ENCODE measurements at regions of chr14 and their contacts with region 1.

Region 1: GRCh38 chr14:75751296-75751695 is 90.2 kb downstream of the TTLL5 start:
- DNase-seq: peak; percentile 49
- ATAC-seq: peak; percentile 81
- H3K4me3 ChIP-seq: no peak overlapping the region
- H3K27ac ChIP-seq: no peak overlapping the region
- H3K4me1 ChIP-seq: peaks cover 1% of the 10 kb centered on the region; the same call in 1 of the 2 replicates
- H3K27me3 ChIP-seq: no peaks in the 10 kb centered on the region
- CTCF ChIP-seq: no peak
- POLR2A ChIP-seq: no peak
- RAD21 ChIP-seq: no peak

Region 2: GRCh38 chr14:75249251-75249957 is 501.9 kb before region 1 on chr14:
- CTCF ChIA-PET with region 1: no interaction called
- POLR2A ChIA-PET with region 1: no interaction called
- dilution Hi-C with region 1: no loop called
- in situ Hi-C with region 1: no loop called
- intact Hi-C with region 1: no loop called
- DNase-seq: no peak
- ATAC-seq: no peak
- H3K4me3 ChIP-seq: no peak overlapping the region
- H3K27ac ChIP-seq: no peak overlapping the region
- H3K4me1 ChIP-seq: no peaks in the 10 kb centered on the region
- H3K27me3 ChIP-seq: peaks cover 10% of the 10 kb centered on the region; the same call in 1 of the 2 replicates
- CTCF ChIP-seq: no peak
- POLR2A ChIP-seq: no peak
- RAD21 ChIP-seq: no peak

Region 3: GRCh38 chr14:75720842-75721498 is 30.3 kb before region 1 on chr14:
- CTCF ChIA-PET with region 1: interaction called, 10 read pairs
- POLR2A ChIA-PET with region 1: no interaction called
- dilution Hi-C with region 1: no loop called
- in situ Hi-C with region 1: no loop called
- intact Hi-C with region 1: no loop called
- DNase-seq: no peak
- ATAC-seq: no peak
- H3K4me3 ChIP-seq: no peak overlapping the region
- H3K27ac ChIP-seq: no peak overlapping the region
- H3K4me1 ChIP-seq: peaks cover 6% of the 10 kb centered on the region
- H3K27me3 ChIP-seq: peaks cover 23% of the 10 kb centered on the region
- CTCF ChIP-seq: no peak
- POLR2A ChIP-seq: no peak
- RAD21 ChIP-seq: no peak

Region 4: DNA sequence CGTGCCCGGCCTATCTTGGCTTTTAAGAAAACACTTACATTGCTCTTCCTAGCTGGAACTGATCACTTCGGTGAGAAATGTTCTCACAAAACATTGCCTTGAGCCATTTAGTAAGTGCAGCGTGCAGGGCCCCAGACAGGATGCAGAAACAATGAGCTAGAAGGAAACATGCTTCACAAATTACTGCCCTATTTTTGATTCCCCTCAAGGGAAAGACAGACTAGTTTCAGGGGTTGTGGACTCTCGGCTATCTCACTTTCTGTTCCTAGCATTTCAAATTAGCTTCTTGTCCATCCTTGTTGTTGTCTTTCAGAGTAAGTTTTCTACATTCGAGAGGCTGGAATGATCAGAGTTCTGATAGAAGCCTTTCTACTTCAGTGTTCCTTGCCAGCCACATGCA is 208.9 kb after region 1 on chr14:
- CTCF ChIA-PET with region 1: no interaction called
- POLR2A ChIA-PET with region 1: interaction called, 13 read pairs
- dilution Hi-C with region 1: no loop called
- in situ Hi-C with region 1: no loop called
- intact Hi-C with region 1: no loop called
- DNase-seq: no peak
- ATAC-seq: no peak
- H3K4me3 ChIP-seq: no peak overlapping the region
- H3K27ac ChIP-seq: no peak overlapping the region
- H3K4me1 ChIP-seq: no peaks in the 10 kb centered on the region
- H3K27me3 ChIP-seq: no peaks in the 10 kb centered on the region
- CTCF ChIP-seq: no peak
- POLR2A ChIP-seq: no peak
- RAD21 ChIP-seq: no peak